Tibial artery (tissue), 4 donors: ENCODE measurements at regions of chr7 and their contacts with region 1.

Region 1: GRCh38 chr7:151876899-151877777 is at the start of gene PRKAG2:
- DNase-seq: peak; percentile 80 to 86
- H3K4me3 ChIP-seq: peak within 1 kb of the TSS; percentile 79 to 88
- H3K27ac ChIP-seq: peak within 1 kb of the TSS; percentile 87 to 94
- H3K4me1 ChIP-seq: peaks cover 0 to 25% (median 18%) of the 10 kb centered on the region in 4 donors
- H3K27me3 ChIP-seq: no peaks in the 10 kb centered on the region
- CTCF ChIP-seq: no peak

Region 2: DNA sequence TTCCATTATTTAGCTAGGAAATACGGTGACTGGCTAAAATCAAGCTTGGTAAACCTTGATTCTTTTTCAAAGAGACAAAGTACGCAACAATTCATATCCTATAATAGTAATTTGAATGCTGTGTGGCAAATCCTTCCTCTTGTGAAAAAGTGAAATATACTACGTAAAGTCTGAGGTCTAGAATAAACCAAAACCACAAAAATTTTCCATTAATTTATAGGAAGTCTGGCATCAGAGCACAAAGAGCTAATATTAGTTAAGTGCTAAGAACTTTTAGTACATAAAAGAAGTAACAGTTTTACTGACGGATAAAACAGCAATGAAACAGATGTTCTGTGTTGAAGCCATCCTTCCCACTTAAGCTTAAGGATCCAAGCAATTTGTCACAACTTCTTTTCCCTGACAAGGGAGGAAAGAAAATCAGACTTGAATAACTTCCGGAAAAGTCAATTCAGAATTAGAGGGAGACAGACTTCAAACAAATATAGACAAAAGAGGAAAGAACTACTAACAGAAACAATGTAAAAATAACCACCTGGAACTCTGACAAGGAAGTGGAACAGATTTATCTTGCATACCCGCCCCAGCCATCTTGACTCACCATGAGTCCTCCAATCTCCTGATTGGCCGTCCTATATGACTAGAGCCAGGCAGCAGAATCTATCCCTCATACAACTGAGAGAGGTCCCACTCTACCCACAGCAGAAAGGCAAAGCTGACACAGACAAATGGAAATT is 392.0 kb before region 1 on chr7:
- intact Hi-C with region 1: no loop called
- DNase-seq: no peak
- H3K4me3 ChIP-seq: no peak overlapping the region
- H3K27ac ChIP-seq: peak overlapping the region in 1 of 2 donors; percentile 1
- H3K4me1 ChIP-seq: peaks cover 0 to 40% (median 8%) of the 10 kb centered on the region in 4 donors
- H3K27me3 ChIP-seq: no peaks in the 10 kb centered on the region
- CTCF ChIP-seq: no peak

Region 3: GRCh38 chr7:152025077-152025936 is 148.2 kb after region 1 on chr7 and contains the start of gene GALNT11:
- intact Hi-C with region 1: loop called (anchors 10 kb)
- DNase-seq: peak; percentile 78 to 91
- H3K4me3 ChIP-seq: peak within 1 kb of the TSS; percentile 67 to 70
- H3K27ac ChIP-seq: peak within 1 kb of the TSS; percentile 83
- H3K4me1 ChIP-seq: peaks cover 0 to 12% (median 5%) of the 10 kb centered on the region in 4 donors
- H3K27me3 ChIP-seq: no peaks in the 10 kb centered on the region
- CTCF ChIP-seq: peak; percentile 12 to 32